GM12878 (cell line): ENCODE measurements at regions of chr11 and their contacts with region 1.

Region 1: GRCh38 chr11:66069715-66070603 is at the start of gene PACS1:
- DNase-seq: no peak
- ATAC-seq: peak; percentile 61
- H3K4me3 ChIP-seq: peak within 1 kb of the TSS; percentile 94
- H3K27ac ChIP-seq: peak within 1 kb of the TSS; percentile 83
- H3K4me1 ChIP-seq: peaks cover 26% of the 10 kb centered on the region
- H3K27me3 ChIP-seq: no peaks in the 10 kb centered on the region
- CTCF ChIP-seq: no peak
- EP300 ChIP-seq: no peak
- POLR2A ChIP-seq: peak; percentile 68
- RAD21 ChIP-seq: no peak
- polyA plus RNA-seq, gene PACS1: 1.1 to 1.2 TPM

Region 2: DNA sequence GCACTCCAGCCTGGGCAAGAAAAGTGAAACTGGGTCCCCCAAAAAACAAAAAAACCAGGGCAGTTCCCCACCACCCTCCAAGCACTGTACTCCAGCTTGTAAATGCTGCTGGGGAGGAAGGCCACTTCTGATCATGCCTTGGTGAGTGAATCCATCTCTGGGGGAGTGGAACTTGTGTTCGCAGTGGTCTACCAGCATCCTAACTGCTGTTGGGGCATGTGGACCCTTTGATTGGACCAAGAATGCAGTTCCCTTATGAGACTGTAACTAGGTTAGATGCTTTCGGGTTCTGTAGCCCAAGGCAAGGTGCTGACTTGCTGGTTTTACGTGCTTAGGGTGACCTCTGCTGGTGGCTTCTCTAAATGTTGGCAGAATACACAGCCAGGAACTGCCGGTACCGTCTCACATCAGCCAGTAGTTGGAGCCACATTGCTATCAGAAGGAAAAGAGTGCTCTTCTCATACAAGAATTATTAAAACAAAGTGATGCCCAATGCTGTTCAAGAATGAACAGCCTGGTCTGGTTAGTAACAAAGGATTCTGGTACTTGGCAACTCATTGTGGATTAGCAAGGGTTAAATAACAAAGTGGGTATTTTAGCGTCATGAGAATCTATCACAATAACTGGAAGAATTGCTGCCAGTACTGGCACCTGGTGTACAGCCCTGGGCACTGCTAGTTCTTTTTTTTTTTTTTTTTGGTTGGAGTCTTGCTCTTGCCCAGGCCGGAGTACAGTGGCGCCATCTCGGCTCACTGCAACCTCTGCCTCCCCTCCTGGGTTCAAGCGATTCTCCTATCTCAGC is 81.0 kb before region 1 on chr11:
- CTCF ChIA-PET with region 1: interaction called, 17 read pairs
- POLR2A ChIA-PET with region 1: no interaction called
- RAD21 ChIA-PET with region 1: no interaction called
- SMC1A ChIA-PET with region 1: interaction called, 3 read pairs
- in situ Hi-C with region 1: no loop called
- intact Hi-C with region 1: no loop called
- DNase-seq: peak; percentile 90
- ATAC-seq: peak; percentile 100
- H3K4me3 ChIP-seq: no peak overlapping the region
- H3K27ac ChIP-seq: no peak overlapping the region
- H3K4me1 ChIP-seq: no peaks in the 10 kb centered on the region
- H3K27me3 ChIP-seq: no peaks in the 10 kb centered on the region
- CTCF ChIP-seq: peak; percentile 92 to 100 (median 99); a peak in 5 of 6 replicates
- EP300 ChIP-seq: no peak
- POLR2A ChIP-seq: no peak; the same call in 1 of the 2 replicates
- RAD21 ChIP-seq: peak; percentile 94

Region 3: DNA sequence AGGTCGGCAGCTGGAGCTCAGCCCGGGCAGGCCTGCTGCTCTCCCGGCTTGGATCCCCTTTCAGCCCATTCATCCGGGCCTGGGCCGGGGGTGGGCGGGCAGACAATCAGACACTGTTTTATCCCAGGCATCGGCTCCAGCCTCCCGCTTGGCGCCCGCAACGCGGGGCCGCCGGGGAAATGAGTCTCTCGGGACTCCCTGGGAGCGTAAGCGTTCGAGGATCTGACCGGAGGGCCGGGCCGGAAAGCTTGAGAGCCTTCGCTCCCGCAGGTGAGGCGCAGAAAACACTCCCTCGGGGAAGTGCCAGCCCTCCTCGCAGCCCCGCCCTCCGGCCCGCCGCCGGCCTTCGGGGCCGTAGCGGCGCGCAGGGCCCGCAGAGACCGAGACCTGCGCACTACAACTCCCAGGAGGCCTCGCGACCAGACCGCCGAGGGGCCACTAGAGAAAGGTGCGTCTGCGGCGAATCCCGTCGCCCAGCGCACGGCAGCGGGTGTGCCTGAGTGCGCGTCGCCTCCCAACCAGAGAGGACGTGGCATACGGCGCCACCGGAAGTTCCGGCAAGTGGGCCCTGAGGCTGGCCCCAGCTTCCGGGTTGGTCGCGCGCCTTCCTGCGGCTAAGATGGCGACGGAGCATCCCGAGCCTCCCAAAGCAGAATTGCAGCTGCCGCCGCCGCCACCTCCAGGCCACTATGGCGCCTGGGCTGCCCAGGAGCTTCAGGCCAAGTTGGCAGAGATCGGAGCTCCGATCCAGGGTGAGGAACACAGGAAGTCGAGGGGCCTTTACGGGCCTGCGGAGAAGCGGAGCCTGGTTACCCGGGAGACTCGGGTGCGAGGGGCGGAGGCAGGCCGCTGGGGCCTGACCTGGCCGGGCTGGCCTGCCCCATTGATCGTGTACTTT is 17.9 kb before region 1 on chr11 and contains the start of gene SF3B2:
- CTCF ChIA-PET with region 1: interaction called, 94 read pairs
- POLR2A ChIA-PET with region 1: interaction called, 13 read pairs
- RAD21 ChIA-PET with region 1: interaction called, 21 read pairs
- SMC1A ChIA-PET with region 1: interaction called, 29 read pairs
- in situ Hi-C with region 1: no loop called
- intact Hi-C with region 1: no loop called
- DNase-seq: peak; percentile 96
- ATAC-seq: peak; percentile 98
- H3K4me3 ChIP-seq: peak within 1 kb of the TSS; percentile 98
- H3K27ac ChIP-seq: peak within 1 kb of the TSS; percentile 82
- H3K4me1 ChIP-seq: peaks cover 15% of the 10 kb centered on the region
- H3K27me3 ChIP-seq: no peaks in the 10 kb centered on the region
- CTCF ChIP-seq: no peak
- EP300 ChIP-seq: no peak
- POLR2A ChIP-seq: peak; percentile 97
- RAD21 ChIP-seq: no peak
- polyA plus RNA-seq, gene SF3B2: 56.3 to 123 TPM

Region 4: GRCh38 chr11:66112601-66113098 is 42.7 kb after region 1 on chr11:
- CTCF ChIA-PET with region 1: interaction called, 109 read pairs
- POLR2A ChIA-PET with region 1: interaction called, 21 read pairs
- RAD21 ChIA-PET with region 1: interaction called, 45 read pairs
- SMC1A ChIA-PET with region 1: interaction called, 265 read pairs
- in situ Hi-C with region 1: no loop called
- intact Hi-C with region 1: loop called (anchors 1 kb)
- DNase-seq: no peak
- ATAC-seq: peak; percentile 77
- H3K4me3 ChIP-seq: peak overlapping the region; percentile 45
- H3K27ac ChIP-seq: peak overlapping the region; percentile 88
- H3K4me1 ChIP-seq: peaks cover 72% of the 10 kb centered on the region
- H3K27me3 ChIP-seq: no peaks in the 10 kb centered on the region
- CTCF ChIP-seq: no peak
- EP300 ChIP-seq: peak; percentile 80 to 90; a peak in 3 of 4 replicates
- POLR2A ChIP-seq: no peak
- RAD21 ChIP-seq: no peak

Region 5: DNA sequence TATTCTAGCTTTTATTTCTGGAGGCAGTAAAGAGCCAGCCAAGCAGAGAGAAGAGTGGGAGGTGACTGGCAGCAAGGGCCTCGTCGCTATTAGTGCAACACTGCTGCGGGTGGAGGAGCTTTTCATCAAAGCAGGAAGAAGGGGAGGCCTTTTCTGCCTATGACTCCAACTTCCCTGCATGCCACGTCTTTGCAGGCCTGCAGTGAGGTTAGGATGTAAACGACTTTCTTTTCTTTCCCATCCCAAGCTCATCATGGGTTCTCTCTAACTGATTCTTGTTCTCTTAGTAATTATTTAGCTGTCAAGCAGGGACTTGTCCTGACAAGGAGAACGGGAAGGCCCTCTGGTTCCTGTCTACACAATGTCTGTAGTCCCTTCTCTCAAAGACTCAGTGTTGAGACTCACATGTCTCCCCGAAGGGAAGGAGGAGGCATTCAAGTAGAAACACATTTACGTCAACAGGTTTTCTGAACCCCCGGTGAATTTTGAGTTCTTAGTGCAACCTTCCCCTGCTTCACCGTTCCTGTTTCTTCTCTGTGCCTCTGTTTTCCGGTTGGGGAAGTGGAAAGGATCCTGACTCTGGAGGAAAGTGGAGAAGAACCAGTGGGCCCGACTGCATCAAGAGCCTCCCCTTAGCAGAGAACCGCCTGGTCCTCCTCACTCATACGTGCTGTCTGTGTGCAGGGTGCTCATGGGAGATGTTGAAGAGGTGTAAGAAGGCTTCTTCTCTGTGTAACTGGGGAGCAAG is 57.0 kb after region 1 on chr11:
- CTCF ChIA-PET with region 1: interaction called, 109 read pairs
- POLR2A ChIA-PET with region 1: interaction called, 23 read pairs
- RAD21 ChIA-PET with region 1: interaction called, 22 read pairs
- SMC1A ChIA-PET with region 1: interaction called, 265 read pairs
- in situ Hi-C with region 1: loop called (anchors 5 kb)
- intact Hi-C with region 1: loop called (anchors 2 kb)
- DNase-seq: no peak
- ATAC-seq: peak; percentile 87
- H3K4me3 ChIP-seq: peak overlapping the region; percentile 60
- H3K27ac ChIP-seq: peak overlapping the region; percentile 91
- H3K4me1 ChIP-seq: peaks cover 52% of the 10 kb centered on the region
- H3K27me3 ChIP-seq: no peaks in the 10 kb centered on the region
- CTCF ChIP-seq: 0 out of 6 replicates have a peak, but pooled peaks of 1 of the 3 experiments have one; percentile 9
- EP300 ChIP-seq: no peak
- POLR2A ChIP-seq: peak; percentile 64
- RAD21 ChIP-seq: no peak